Left lung (tissue), 14 donors: ENCODE measurements at regions of chr3 and their contacts with region 1.

Region 1: GRCh38 chr3:59575113-59576001 is 525.5 kb upstream of the CFAP20DC start:
- DNase-seq: peak; percentile 72 to 88 (median 83)
- ATAC-seq: peak; percentile 91
- H3K4me3 ChIP-seq: no peak overlapping the region
- H3K27ac ChIP-seq: no peak overlapping the region
- H3K4me1 ChIP-seq: no peaks in the 10 kb centered on the region
- H3K27me3 ChIP-seq: no peaks in the 10 kb centered on the region
- CTCF ChIP-seq: peak; percentile 97

Region 2: GRCh38 chr3:59862686-59863085 is 287.3 kb after region 1 on chr3:
- intact Hi-C with region 1: loop called in 1 of 2 experiments (anchors 5 kb)
- DNase-seq: no peak
- ATAC-seq: no peak
- H3K4me3 ChIP-seq: no peak overlapping the region
- H3K27ac ChIP-seq: no peak overlapping the region
- H3K4me1 ChIP-seq: no peaks in the 10 kb centered on the region
- H3K27me3 ChIP-seq: no peaks in the 10 kb centered on the region
- CTCF ChIP-seq: no peak